Activated B cell treated with CpG ODN at 0.5 μM for 24 hours (primary cell): ENCODE measurements at regions of chrX and their contacts with region 1.

Region 1: DNA sequence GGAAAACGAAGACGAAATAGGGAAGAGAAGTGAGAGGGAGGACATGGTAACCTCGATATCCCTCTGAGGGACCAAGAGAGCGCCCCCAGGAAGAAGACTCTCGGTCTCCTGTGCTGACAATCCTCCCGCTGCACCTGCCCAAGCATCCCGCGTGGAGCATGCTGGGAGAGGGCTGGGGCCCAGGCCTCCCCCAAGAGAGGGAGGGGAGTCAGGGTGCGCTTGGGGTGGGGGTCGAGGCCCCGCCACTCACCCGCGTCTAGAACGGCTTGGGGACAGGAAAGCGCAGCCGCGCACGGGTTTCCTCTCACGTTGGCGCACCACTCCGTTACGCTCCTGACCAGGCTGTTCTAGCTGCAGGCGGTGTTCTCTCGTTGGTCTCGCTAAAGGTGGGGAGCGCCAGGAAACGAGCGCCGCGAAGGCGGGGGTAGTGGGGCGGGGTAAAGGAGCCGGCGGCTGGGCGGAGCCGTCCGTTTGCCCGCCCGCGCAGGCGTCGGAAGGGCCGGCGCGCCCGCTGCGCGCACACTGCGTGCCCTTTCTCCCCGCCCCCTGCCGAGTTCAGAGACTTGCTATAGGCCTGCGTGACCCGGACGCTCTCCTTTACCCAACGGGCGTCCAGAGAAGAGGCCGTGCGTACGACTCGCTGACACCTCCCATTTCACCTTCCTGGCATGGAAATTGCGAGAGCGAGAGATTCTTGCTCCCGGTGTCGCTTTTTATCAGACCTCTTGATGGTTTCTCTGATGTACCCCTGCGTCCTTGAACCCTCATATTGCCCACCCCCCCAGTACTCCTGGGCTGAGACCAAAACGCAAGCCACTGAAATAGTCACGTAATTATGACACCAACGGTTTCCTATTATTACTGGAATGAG is at the start of gene C1GALT1C1:
- DNase-seq: peak; percentile 80
- ATAC-seq: peak; percentile 92
- H3K4me3 Mint-ChIP-seq: peak within 1 kb of the TSS; percentile 93
- H3K27ac Mint-ChIP-seq: peak within 1 kb of the TSS; percentile 97
- H3K4me1 Mint-ChIP-seq: peaks cover 8% of the 10 kb centered on the region
- H3K27me3 Mint-ChIP-seq: no peaks in the 10 kb centered on the region
- CTCF ChIP-seq: no peak
- total RNA-seq, gene C1GALT1C1: 8.2 and 8.7 TPM in 2 replicates

Region 2: GRCh38 chrX:120485638-120486520 is 144.0 kb before region 1 on chrX:
- CTCF ChIA-PET with region 1: no interaction called
- POLR2A ChIA-PET with region 1: no interaction called
- intact Hi-C with region 1: loop called (anchors 5 kb)
- DNase-seq: peak; percentile 38
- ATAC-seq: peak; percentile 83
- H3K4me3 Mint-ChIP-seq: peak overlapping the region; percentile 87
- H3K27ac Mint-ChIP-seq: peak overlapping the region; percentile 91
- H3K4me1 Mint-ChIP-seq: peaks cover 14% of the 10 kb centered on the region
- H3K27me3 Mint-ChIP-seq: no peaks in the 10 kb centered on the region
- CTCF ChIP-seq: no peak

Region 3: DNA sequence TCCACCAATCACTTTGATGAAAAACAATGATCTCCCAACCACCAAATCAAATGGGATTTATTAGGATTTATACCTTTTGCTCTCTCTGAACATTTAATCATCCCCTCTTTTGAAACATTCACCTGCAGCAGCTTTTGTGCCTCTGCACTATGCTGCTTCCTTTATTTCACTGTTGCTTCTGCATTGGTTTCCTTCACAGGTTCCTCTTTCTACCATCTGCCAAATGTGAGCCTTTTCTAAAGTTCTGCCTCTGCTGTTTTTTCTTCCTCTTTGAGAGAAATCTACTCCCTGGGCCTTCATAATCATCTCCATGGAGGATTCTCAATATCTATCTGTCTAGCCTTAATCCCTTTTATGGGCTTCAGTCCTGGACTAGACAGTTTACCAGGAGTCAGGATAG is 93.8 kb before region 1 on chrX:
- CTCF ChIA-PET with region 1: no interaction called
- POLR2A ChIA-PET with region 1: no interaction called
- intact Hi-C with region 1: loop called (anchors 2 kb)
- DNase-seq: no peak
- ATAC-seq: peak; percentile 49
- H3K4me3 Mint-ChIP-seq: no peak overlapping the region
- H3K27ac Mint-ChIP-seq: peak overlapping the region; percentile 64
- H3K4me1 Mint-ChIP-seq: peaks cover 23% of the 10 kb centered on the region
- H3K27me3 Mint-ChIP-seq: no peaks in the 10 kb centered on the region
- CTCF ChIP-seq: no peak

Region 4: GRCh38 chrX:120575379-120576114 is 54.4 kb before region 1 on chrX:
- CTCF ChIA-PET with region 1: no interaction called
- POLR2A ChIA-PET with region 1: interaction called, 17 read pairs
- intact Hi-C with region 1: no loop called
- DNase-seq: no peak
- ATAC-seq: no peak
- H3K4me3 Mint-ChIP-seq: no peak overlapping the region
- H3K27ac Mint-ChIP-seq: no peak overlapping the region
- H3K4me1 Mint-ChIP-seq: peaks cover 3% of the 10 kb centered on the region
- H3K27me3 Mint-ChIP-seq: no peaks in the 10 kb centered on the region
- CTCF ChIP-seq: no peak

Region 5: GRCh38 chrX:120755066-120755846 is 125.4 kb after region 1 on chrX:
- CTCF ChIA-PET with region 1: no interaction called
- POLR2A ChIA-PET with region 1: no interaction called
- intact Hi-C with region 1: loop called (anchors 2 kb)
- DNase-seq: peak; percentile 23
- ATAC-seq: peak; percentile 79
- H3K4me3 Mint-ChIP-seq: peak overlapping the region; percentile 3
- H3K27ac Mint-ChIP-seq: peak overlapping the region; percentile 90
- H3K4me1 Mint-ChIP-seq: peaks cover 88% of the 10 kb centered on the region
- H3K27me3 Mint-ChIP-seq: no peaks in the 10 kb centered on the region
- CTCF ChIP-seq: no peak